ENCODE measurements at regions of chr10 and their contacts with region 1.

Region 1: GRCh38 chr10:91006001-91006751 is 85.3 kb upstream of the ANKRD1 start:
- DNase-seq: peak; percentile 37 to 78 (median 68)
- ATAC-seq: peak; percentile 95
- H3K4me3 ChIP-seq: peak overlapping the region; percentile 7
- H3K4me3 Mint-ChIP-seq: peak overlapping the region in 9 of 10 donors; percentile 31 to 76 (median 68)
- H3K27ac ChIP-seq: peak overlapping the region; percentile 21
- H3K27ac Mint-ChIP-seq: peak overlapping the region; percentile 37 to 86 (median 74)
- H3K4me1 ChIP-seq: peaks cover 7 to 19% of the 10 kb centered on the region in 2 donors
- H3K4me1 Mint-ChIP-seq: peaks cover 0 to 26% (median 21%) of the 10 kb centered on the region in 7 donors
- H3K27me3 ChIP-seq: no peaks in the 10 kb centered on the region
- H3K27me3 Mint-ChIP-seq: peaks cover 0 to 22% (median 0%) of the 10 kb centered on the region in 5 donors

Region 2: GRCh38 chr10:90912174-90912573 is 94.0 kb before region 1 on chr10:
- CTCF ChIA-PET with region 1: no interaction called
- POLR2A ChIA-PET with region 1: no interaction called
- intact Hi-C with region 1: loop called (anchors 1 to 2 kb)
- DNase-seq: no peak
- ATAC-seq: no peak
- H3K4me3 ChIP-seq: no peak overlapping the region
- H3K4me3 Mint-ChIP-seq: no peak overlapping the region
- H3K27ac ChIP-seq: no peak overlapping the region
- H3K27ac Mint-ChIP-seq: no peak overlapping the region
- H3K4me1 ChIP-seq: peaks cover 0 to 4% of the 10 kb centered on the region in 2 donors
- H3K4me1 Mint-ChIP-seq: peaks cover 0 to 11% (median 4%) of the 10 kb centered on the region in 7 donors
- H3K27me3 ChIP-seq: no peaks in the 10 kb centered on the region
- H3K27me3 Mint-ChIP-seq: peaks cover 0 to 16% (median 4%) of the 10 kb centered on the region in 5 donors

Region 3: GRCh38 chr10:91088300-91089140 is 82.3 kb after region 1 on chr10:
- CTCF ChIA-PET with region 1: interaction called, 8 read pairs
- POLR2A ChIA-PET with region 1: no interaction called
- intact Hi-C with region 1: loop called (anchors 1 to 2 kb)
- DNase-seq: peak in 6 of 9 donors; percentile 10 to 37 (median 26)
- ATAC-seq: peak; percentile 64
- H3K4me3 ChIP-seq: no peak overlapping the region
- H3K4me3 Mint-ChIP-seq: no peak overlapping the region
- H3K27ac ChIP-seq: no peak overlapping the region
- H3K27ac Mint-ChIP-seq: peak overlapping the region in 2 of 9 donors; percentile 15 to 42
- H3K4me1 ChIP-seq: no peaks in the 10 kb centered on the region
- H3K4me1 Mint-ChIP-seq: peaks cover 0 to 2% (median 0%) of the 10 kb centered on the region in 7 donors
- H3K27me3 ChIP-seq: no peaks in the 10 kb centered on the region
- H3K27me3 Mint-ChIP-seq: peaks cover 0 to 11% (median 0%) of the 10 kb centered on the region in 5 donors

Region 4: GRCh38 chr10:91103384-91104192 is 97.4 kb after region 1 on chr10:
- CTCF ChIA-PET with region 1: no interaction called
- POLR2A ChIA-PET with region 1: no interaction called
- intact Hi-C with region 1: no loop called
- DNase-seq: peak in 1 of 9 donors; percentile 1
- ATAC-seq: peak; percentile 38
- H3K4me3 ChIP-seq: no peak overlapping the region
- H3K4me3 Mint-ChIP-seq: no peak overlapping the region
- H3K27ac ChIP-seq: no peak overlapping the region
- H3K27ac Mint-ChIP-seq: peak overlapping the region in 1 of 9 donors; percentile 32
- H3K4me1 ChIP-seq: no peaks in the 10 kb centered on the region
- H3K4me1 Mint-ChIP-seq: peaks cover 0 to 18% (median 5%) of the 10 kb centered on the region in 7 donors
- H3K27me3 ChIP-seq: no peaks in the 10 kb centered on the region
- H3K27me3 Mint-ChIP-seq: peaks cover 0 to 18% (median 0%) of the 10 kb centered on the region in 5 donors

Region 5: GRCh38 chr10:91127341-91128082 is 121.3 kb after region 1 on chr10:
- CTCF ChIA-PET with region 1: no interaction called
- POLR2A ChIA-PET with region 1: no interaction called
- intact Hi-C with region 1: no loop called
- DNase-seq: no peak
- ATAC-seq: no peak
- H3K4me3 ChIP-seq: no peak overlapping the region
- H3K4me3 Mint-ChIP-seq: no peak overlapping the region
- H3K27ac ChIP-seq: no peak overlapping the region
- H3K27ac Mint-ChIP-seq: no peak overlapping the region
- H3K4me1 ChIP-seq: no peaks in the 10 kb centered on the region
- H3K4me1 Mint-ChIP-seq: peaks cover 0 to 8% (median 5%) of the 10 kb centered on the region in 7 donors
- H3K27me3 ChIP-seq: no peaks in the 10 kb centered on the region
- H3K27me3 Mint-ChIP-seq: peaks cover 5 to 9% (median 7%) of the 10 kb centered on the region in 5 donors

Region 6: DNA sequence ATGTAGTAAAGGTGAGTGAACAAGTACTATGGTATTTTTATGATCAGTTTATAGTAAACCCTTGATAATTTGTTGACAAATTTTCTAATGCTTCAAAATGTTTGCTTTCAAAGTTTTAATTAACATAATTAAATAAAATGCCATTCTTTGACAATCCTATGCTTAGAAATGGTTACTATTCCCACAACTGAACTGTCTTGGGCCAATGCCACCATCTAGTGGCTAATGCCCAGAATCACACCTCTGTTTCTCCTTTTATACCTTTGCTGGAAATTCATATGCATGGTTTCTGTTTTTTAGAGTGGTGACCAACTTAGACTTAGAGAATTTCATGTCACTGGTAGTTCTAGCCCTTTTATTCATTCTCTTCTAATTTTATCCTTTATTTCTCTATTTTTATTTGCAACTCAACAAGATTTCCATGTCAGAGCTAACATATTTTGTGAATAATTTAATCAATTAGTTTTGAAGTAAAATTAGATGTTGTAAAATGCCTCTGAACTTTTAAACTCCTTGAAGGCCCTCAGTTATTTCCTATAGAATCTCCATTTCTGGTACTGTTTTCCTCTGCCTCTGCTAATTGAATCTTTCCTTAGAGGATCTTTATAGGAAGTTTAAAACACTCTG is 245.4 kb after region 1 on chr10:
- CTCF ChIA-PET with region 1: interaction called, 148 read pairs
- POLR2A ChIA-PET with region 1: interaction called, 10 read pairs
- intact Hi-C with region 1: loop called (anchors 1 kb)
- DNase-seq: peak; percentile 16 to 72 (median 64)
- ATAC-seq: peak; percentile 89
- H3K4me3 ChIP-seq: no peak overlapping the region
- H3K4me3 Mint-ChIP-seq: no peak overlapping the region
- H3K27ac ChIP-seq: no peak overlapping the region
- H3K27ac Mint-ChIP-seq: no peak overlapping the region
- H3K4me1 ChIP-seq: peaks cover under 1 to 13% of the 10 kb centered on the region in 2 donors
- H3K4me1 Mint-ChIP-seq: peaks cover 5 to 15% (median 9%) of the 10 kb centered on the region in 7 donors
- H3K27me3 ChIP-seq: no peaks in the 10 kb centered on the region
- H3K27me3 Mint-ChIP-seq: no peaks in the 10 kb centered on the region

Region 7: GRCh38 chr10:91389636-91390512 is 383.7 kb after region 1 on chr10:
- CTCF ChIA-PET with region 1: no interaction called
- POLR2A ChIA-PET with region 1: no interaction called
- intact Hi-C with region 1: loop called in 1 of 2 experiments (anchors 1 kb)
- DNase-seq: peak in 7 of 9 donors; percentile 51 to 76 (median 68)
- ATAC-seq: peak; percentile 98
- H3K4me3 ChIP-seq: no peak overlapping the region
- H3K4me3 Mint-ChIP-seq: peak overlapping the region in 6 of 10 donors; percentile 4 to 67 (median 38)
- H3K27ac ChIP-seq: no peak overlapping the region
- H3K27ac Mint-ChIP-seq: peak overlapping the region in 1 of 9 donors; percentile 30
- H3K4me1 ChIP-seq: no peaks in the 10 kb centered on the region
- H3K4me1 Mint-ChIP-seq: peaks cover 0 to 11% (median 6%) of the 10 kb centered on the region in 7 donors
- H3K27me3 ChIP-seq: no peaks in the 10 kb centered on the region
- H3K27me3 Mint-ChIP-seq: peaks cover 12 to 34% (median 20%) of the 10 kb centered on the region in 5 donors